H1 (cell line): ENCODE measurements at regions of chr4 and their contacts with region 1.

Region 1: GRCh38 chr4:6250235-6250983 is 19.2 kb upstream of the WFS1 start:
- DNase-seq: peak in 1 of 2 experiments; percentile 62
- H3K4me3 ChIP-seq: peak overlapping the region; percentile 5 to 50 (median 26); a peak in 6 of 8 replicates
- H3K27ac ChIP-seq: no peak overlapping the region
- H3K4me1 ChIP-seq: peaks cover 0 to 5% (median 4%) of the 10 kb centered on the region in 4 experiments; a peak in 3 of 7 replicates
- H3K27me3 ChIP-seq: no peaks in the 10 kb centered on the region; a peak in 1 of 7 replicates
- CTCF ChIP-seq: peak in 2 of 3 experiments; percentile 69 to 70; a peak in 3 of 4 replicates
- EP300 ChIP-seq: no peak
- POLR2A ChIP-seq: no peak
- RAD21 ChIP-seq: peak; percentile 83 to 86

Region 2: GRCh38 chr4:5019274-5019673 is 1231.1 kb before region 1 on chr4 and contains the start of gene CYTL1:
- CTCF ChIA-PET with region 1: no interaction called
- POLR2A ChIA-PET with region 1: no interaction called
- DNase-seq: peak in 1 of 2 experiments; percentile 70
- H3K4me3 ChIP-seq: peak within 1 kb of the TSS; percentile 21 to 60 (median 36); a peak in 7 of 8 replicates
- H3K27ac ChIP-seq: no peak within 1 kb of the TSS
- H3K4me1 ChIP-seq: peaks cover 0 to 7% (median 2%) of the 10 kb centered on the region in 4 experiments; a peak in 3 of 7 replicates
- H3K27me3 ChIP-seq: peaks cover 0 to 3% (median 0%) of the 10 kb centered on the region in 4 experiments; a peak in 1 of 7 replicates
- CTCF ChIP-seq: no peak
- EP300 ChIP-seq: no peak
- POLR2A ChIP-seq: no peak
- RAD21 ChIP-seq: no peak
- total RNA-seq, gene CYTL1: 8.1 and 9.8 TPM in 2 replicates

Region 3: DNA sequence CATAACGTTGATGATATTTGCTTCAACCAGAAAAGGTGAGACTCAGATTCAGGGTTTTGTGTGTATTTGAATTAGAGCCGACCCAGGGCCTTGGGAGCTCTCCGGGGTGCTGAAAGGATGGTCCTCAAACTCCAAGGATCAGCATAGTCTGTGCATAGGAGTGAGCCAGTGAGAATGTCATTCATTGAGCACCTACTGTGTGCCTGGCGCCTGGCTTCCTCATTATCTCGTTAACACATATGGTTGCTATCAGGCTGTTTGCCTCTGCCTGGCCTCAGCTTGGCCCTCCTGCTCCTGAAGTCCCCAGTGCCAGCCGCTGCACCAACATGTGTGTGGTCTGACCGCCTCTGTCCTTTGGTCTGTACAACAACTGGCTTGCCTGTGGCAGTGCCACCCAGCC is 24.9 kb before region 1 on chr4:
- CTCF ChIA-PET with region 1: interaction called, 11 read pairs
- POLR2A ChIA-PET with region 1: interaction called, 9 read pairs
- DNase-seq: peak in 1 of 2 experiments; percentile 85
- H3K4me3 ChIP-seq: no peak overlapping the region
- H3K27ac ChIP-seq: no peak overlapping the region
- H3K4me1 ChIP-seq: peaks cover 0 to 4% (median 1%) of the 10 kb centered on the region in 4 experiments; a peak in 5 of 7 replicates
- H3K27me3 ChIP-seq: peaks cover 0 to 11% (median 7%) of the 10 kb centered on the region in 4 experiments; a peak in 4 of 7 replicates
- CTCF ChIP-seq: no peak
- EP300 ChIP-seq: no peak
- POLR2A ChIP-seq: no peak
- RAD21 ChIP-seq: no peak; a peak in 1 of 4 replicates

Region 4: DNA sequence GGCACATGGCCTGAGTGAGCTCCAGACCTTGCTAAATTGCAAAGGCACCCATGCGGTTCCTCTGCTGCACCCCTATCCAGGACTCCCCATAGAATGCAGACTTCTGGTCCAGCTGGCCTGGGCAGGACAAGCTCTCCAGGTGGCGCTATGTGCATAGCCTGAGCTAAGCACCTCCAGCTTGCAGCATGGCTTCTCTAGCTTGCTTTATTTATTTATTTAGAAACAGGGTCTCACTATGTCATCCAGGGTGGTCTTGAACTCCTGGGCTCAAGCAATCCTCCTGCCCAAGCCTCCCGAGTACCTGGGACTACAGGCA is 13.8 kb after region 1 on chr4:
- CTCF ChIA-PET with region 1: interaction called, 263 read pairs
- POLR2A ChIA-PET with region 1: interaction called, 6 read pairs
- DNase-seq: peak in 1 of 2 experiments; percentile 58
- H3K4me3 ChIP-seq: no peak overlapping the region
- H3K27ac ChIP-seq: 0 out of 2 replicates have a peak overlapping the region, but pooled peaks have one; percentile 4
- H3K4me1 ChIP-seq: peaks cover 3 to 8% (median 4%) of the 10 kb centered on the region in 4 experiments
- H3K27me3 ChIP-seq: peaks cover 0 to 4% (median 0%) of the 10 kb centered on the region in 4 experiments; a peak in 3 of 7 replicates
- CTCF ChIP-seq: peak in 2 of 3 experiments; percentile 64 to 65; a peak in 3 of 4 replicates
- EP300 ChIP-seq: no peak
- POLR2A ChIP-seq: no peak
- RAD21 ChIP-seq: peak; percentile 54 to 73

Region 5: DNA sequence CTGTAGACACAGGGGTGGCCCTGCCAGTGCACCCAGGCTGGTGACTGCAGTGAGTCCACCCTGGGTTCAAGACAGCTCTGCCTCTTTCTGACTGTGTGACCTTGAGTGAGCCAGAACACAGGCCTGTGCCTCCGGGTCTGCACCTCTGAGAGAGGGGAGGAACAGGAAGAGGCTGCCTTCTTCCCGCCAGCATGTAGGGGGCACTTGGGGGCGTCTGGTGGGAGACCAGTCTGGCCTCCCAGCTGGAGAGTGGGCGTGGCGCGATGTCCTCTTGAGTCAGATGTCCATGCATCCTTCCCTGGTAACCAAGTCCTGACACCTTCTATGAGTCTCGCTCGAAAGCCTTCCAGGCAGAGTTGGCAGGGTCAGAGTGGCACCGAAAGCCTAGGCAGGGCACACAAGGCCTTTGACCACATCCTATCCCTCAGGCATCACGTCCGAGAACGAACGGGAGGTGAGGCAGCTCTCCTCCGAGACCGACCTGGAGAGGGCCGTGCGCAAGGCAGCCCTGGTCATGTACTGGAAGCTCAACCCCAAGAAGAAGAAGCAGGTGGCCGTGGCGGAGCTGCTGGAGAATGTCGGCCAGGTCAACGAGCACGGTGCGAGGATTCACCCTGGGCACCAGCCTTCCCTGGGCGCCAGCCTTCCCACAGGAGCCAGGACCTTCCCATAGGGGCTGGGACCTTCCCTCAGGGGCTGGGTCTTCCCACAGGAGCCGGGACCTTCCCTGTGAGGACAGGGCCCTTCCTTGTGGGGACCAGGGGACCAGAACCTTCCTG is 40.5 kb after region 1 on chr4:
- CTCF ChIA-PET with region 1: interaction called, 26 read pairs
- POLR2A ChIA-PET with region 1: no interaction called
- DNase-seq: no peak
- H3K4me3 ChIP-seq: no peak overlapping the region
- H3K27ac ChIP-seq: no peak overlapping the region
- H3K4me1 ChIP-seq: no peaks in the 10 kb centered on the region
- H3K27me3 ChIP-seq: no peaks in the 10 kb centered on the region
- CTCF ChIP-seq: peak in 1 of 3 experiments; percentile 15; a peak in 1 of 4 replicates
- EP300 ChIP-seq: no peak
- POLR2A ChIP-seq: no peak
- RAD21 ChIP-seq: no peak

Region 6: GRCh38 chr4:6303943-6304342 is 53.5 kb after region 1 on chr4:
- CTCF ChIA-PET with region 1: interaction called, 15 read pairs
- POLR2A ChIA-PET with region 1: no interaction called
- DNase-seq: no peak
- H3K4me3 ChIP-seq: no peak overlapping the region
- H3K27ac ChIP-seq: no peak overlapping the region
- H3K4me1 ChIP-seq: no peaks in the 10 kb centered on the region
- H3K27me3 ChIP-seq: no peaks in the 10 kb centered on the region
- CTCF ChIP-seq: no peak
- EP300 ChIP-seq: no peak
- POLR2A ChIP-seq: no peak
- RAD21 ChIP-seq: no peak